ENCODE measurements at regions of chr13 and their contacts with region 1.

Region 1: DNA sequence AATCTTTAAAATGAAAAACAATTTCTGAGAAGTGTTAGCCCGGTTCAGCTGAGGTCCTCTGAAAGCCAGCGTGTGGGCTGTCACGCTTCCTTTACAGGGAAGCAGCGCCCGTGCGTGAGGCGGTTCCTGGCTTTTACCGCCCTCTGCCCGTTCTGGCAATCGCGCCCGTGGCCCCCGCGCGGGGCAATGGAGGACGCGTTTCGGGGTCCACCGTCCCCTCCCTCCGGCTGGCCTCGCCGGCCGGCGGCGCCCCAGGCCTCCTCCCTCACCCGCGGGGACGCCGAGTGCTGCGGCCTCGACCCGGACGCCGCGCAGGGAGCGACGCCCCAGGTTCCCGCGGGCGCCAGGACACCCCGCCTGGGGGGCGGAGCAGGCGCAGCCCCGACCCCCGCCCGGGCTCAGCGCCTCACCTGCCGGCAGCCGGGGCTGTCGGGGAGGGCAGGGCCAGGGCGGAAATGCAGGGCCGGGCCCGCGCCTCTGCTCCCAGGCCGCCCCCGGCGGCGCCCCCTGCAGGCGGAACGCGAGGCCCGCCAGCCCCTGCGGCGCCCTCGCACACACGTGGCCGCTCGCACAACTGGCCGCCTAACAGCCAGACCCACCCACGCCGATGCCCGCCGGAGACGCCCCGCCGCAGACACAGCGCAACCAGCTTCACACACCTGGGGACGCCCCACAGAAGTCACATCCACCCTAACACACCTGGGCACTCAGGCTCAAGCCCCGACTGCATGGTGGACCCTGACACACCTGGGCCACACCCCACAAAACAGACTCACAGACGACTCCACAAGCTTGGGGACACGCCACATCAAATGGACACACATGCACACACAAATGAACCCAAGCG is at the start of gene GGACT:
- DNase-seq: peak; percentile 77 to 87 (median 83)
- H3K4me3 ChIP-seq: peak within 1 kb of the TSS; percentile 57 to 77
- H3K4me3 Mint-ChIP-seq: peak within 1 kb of the TSS; percentile 82 to 90 (median 86)
- H3K27ac ChIP-seq: peak within 1 kb of the TSS; percentile 74
- H3K27ac Mint-ChIP-seq: peak within 1 kb of the TSS; percentile 83 to 95 (median 91)
- H3K4me1 ChIP-seq: peaks cover 42% of the 10 kb centered on the region
- H3K4me1 Mint-ChIP-seq: peaks cover 34 to 50% (median 41%) of the 10 kb centered on the region in 4 donors
- H3K27me3 ChIP-seq: no peaks in the 10 kb centered on the region
- H3K27me3 Mint-ChIP-seq: no peaks in the 10 kb centered on the region
- total RNA-seq, gene GGACT: 6.7 to 9.6 TPM

Region 2: GRCh38 chr13:100399455-100399854 is 189.1 kb before region 1 on chr13:
- CTCF ChIA-PET with region 1: no interaction called
- POLR2A ChIA-PET with region 1: no interaction called
- intact Hi-C with region 1: no loop called
- DNase-seq: no peak
- H3K4me3 ChIP-seq: no peak overlapping the region
- H3K4me3 Mint-ChIP-seq: no peak overlapping the region
- H3K27ac ChIP-seq: no peak overlapping the region
- H3K27ac Mint-ChIP-seq: no peak overlapping the region
- H3K4me1 ChIP-seq: no peaks in the 10 kb centered on the region
- H3K4me1 Mint-ChIP-seq: peaks cover 0 to 5% (median 0%) of the 10 kb centered on the region in 4 donors
- H3K27me3 ChIP-seq: no peaks in the 10 kb centered on the region
- H3K27me3 Mint-ChIP-seq: no peaks in the 10 kb centered on the region

Region 3: GRCh38 chr13:100547791-100548201 is 40.8 kb before region 1 on chr13:
- CTCF ChIA-PET with region 1: no interaction called
- POLR2A ChIA-PET with region 1: no interaction called
- intact Hi-C with region 1: no loop called
- DNase-seq: no peak
- H3K4me3 ChIP-seq: no peak overlapping the region
- H3K4me3 Mint-ChIP-seq: peak overlapping the region in 1 of 8 donors; percentile 20
- H3K27ac ChIP-seq: no peak overlapping the region
- H3K27ac Mint-ChIP-seq: no peak overlapping the region
- H3K4me1 ChIP-seq: peaks cover under 1% of the 10 kb centered on the region
- H3K4me1 Mint-ChIP-seq: peaks cover 2 to 3% (median 2%) of the 10 kb centered on the region in 4 donors
- H3K27me3 ChIP-seq: no peaks in the 10 kb centered on the region
- H3K27me3 Mint-ChIP-seq: no peaks in the 10 kb centered on the region

Region 4: GRCh38 chr13:101098873-101099272 is 510.3 kb after region 1 on chr13:
- CTCF ChIA-PET with region 1: no interaction called
- POLR2A ChIA-PET with region 1: no interaction called
- intact Hi-C with region 1: loop called (anchors 5 kb)
- DNase-seq: no peak
- H3K4me3 ChIP-seq: no peak overlapping the region
- H3K4me3 Mint-ChIP-seq: no peak overlapping the region
- H3K27ac ChIP-seq: no peak overlapping the region
- H3K27ac Mint-ChIP-seq: no peak overlapping the region
- H3K4me1 ChIP-seq: no peaks in the 10 kb centered on the region
- H3K4me1 Mint-ChIP-seq: no peaks in the 10 kb centered on the region
- H3K27me3 ChIP-seq: no peaks in the 10 kb centered on the region
- H3K27me3 Mint-ChIP-seq: peaks cover 10 to 15% of the 10 kb centered on the region in 2 donors